Head of caudate nucleus (tissue), 42 donors: ENCODE measurements at regions of chr15 and their contacts with region 1.

Region 1: DNA sequence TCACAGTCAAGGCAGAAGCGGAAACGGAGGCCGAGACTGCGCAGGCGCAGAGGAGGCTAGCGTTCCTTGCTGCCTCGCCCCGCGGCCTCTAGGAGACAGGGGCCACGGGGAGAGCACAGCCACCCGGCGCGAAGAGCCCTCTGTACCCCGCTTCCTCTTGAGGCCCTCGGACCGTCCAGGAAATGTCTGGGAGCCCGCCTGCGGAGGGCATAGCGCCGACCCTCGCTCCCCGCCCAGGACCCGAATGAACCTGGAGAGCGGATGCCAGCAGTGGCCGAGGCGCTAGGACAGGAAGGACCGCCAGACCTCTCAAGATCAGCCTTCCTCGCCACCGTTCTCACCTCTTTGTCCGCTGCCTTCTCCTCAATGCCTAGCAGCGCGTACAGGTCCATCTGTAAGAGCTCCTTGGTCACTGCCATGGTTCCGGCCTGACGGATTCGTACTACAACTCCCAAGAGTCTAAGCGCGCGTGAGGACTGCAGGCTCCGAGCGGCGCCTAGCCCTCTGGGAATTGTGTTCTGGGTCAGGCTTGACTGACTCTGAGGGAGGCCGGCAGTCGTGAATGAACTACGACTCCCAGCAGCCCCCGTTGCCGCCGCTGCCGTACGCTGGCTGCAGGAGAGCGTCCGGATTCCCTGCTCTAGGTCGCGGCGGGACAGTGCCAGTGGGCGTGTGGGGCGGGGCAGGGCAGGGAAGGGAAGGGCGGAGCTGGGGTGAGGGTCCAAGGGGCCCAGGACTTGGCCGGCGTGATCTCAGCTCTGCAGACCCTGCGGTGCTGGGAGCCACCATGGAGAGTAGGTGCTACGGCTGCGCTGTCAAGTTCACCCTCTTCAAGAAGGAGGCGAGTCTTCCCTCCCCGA is at the starts of genes DNAJC17 and ZFYVE19:
- DNase-seq: peak; percentile 94 to 100 (median 98)

Region 2: DNA sequence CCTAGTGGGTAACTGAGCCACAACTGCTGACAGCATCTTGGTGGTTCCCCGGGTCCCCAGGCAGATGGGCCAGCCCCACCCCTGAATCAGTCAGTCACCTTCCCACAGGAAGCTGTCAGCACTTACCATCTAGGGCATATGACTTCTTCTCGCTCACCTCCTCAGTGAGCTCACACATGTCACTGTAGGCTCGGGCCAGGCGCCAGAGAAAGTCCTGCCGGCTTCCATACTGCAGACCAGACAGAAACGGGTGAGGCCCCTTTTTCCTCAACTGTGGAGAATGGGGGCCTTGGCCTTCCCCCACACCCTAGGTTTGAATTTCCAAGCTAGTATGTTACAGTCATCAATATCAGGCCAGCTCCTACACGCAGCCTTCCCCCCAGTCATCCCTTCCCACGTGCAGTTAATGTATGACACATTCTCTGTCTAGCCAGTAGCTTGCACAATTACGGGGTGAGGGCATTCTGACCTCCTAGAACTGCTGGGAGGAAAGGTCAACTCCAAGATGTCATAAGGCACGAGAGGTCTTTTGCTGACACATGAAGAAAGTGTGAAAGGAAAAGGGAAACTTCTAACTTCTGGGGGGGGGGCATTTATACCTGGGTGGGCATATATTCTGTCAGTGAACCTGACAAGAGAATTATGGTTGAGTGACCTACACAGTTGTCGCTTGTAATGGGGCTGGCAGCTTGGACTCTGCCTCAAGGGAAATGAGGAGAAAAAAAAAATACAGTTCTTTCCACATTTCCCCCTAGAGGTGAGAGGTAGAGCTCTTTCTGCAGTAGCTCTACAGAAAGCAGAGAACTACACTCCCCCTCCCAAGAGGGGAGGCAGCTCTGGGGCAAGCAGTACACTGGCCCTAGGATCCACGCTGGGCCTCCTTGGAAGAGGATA is 63.1 kb before region 1 on chr15:
- intact Hi-C with region 1: no loop called
- DNase-seq: peak in 2 of 42 donors; percentile 17 to 29

Region 3: GRCh38 chr15:40754883-40755811 is 52.1 kb before region 1 on chr15 and contains the start of gene RMDN3:
- intact Hi-C with region 1: loop called (anchors 1 kb)
- DNase-seq: peak; percentile 67 to 97 (median 93)